PC-9 (cell line): ENCODE measurements at regions of chr10 and their contacts with region 1.

Region 1: GRCh38 chr10:114767101-114767985 is 54.2 kb upstream of the FHIP2A start:
- DNase-seq: no peak
- H3K4me3 ChIP-seq: peak overlapping the region; percentile 71
- H3K27ac ChIP-seq: no peak overlapping the region
- H3K4me1 ChIP-seq: peaks cover 16% of the 10 kb centered on the region
- H3K27me3 ChIP-seq: no peaks in the 10 kb centered on the region
- CTCF ChIP-seq: no peak

Region 2: DNA sequence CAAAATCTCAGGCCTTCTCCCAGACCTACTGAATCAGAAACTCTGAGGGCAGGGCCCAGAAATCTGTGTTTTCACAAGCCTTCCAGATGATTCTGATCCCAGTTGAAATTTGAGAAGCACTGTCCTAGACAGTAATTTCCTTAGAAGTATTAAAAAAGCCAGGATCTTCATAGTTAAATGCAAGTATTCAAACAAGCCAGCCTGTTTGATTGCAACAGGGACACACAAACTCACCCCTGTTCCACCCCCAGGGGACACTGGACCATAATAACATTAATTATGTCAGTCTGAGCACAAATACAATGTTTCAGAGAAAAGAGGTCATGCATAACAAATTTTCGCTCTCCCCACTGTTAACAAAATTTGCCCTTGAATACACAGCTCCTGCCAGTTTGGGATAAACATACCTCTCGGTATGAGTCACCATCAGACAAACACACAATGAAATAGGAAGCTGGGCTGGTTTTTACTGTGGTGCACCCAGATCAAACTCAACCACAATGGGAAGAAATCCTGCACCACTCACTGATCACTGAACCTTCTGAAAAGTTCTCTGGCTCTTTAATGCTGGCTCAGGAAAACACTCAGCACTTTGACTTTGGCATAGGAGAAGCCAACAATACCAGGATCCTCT is 143.6 kb before region 1 on chr10:
- CTCF ChIA-PET with region 1: no interaction called
- POLR2A ChIA-PET with region 1: interaction called, 11 read pairs
- intact Hi-C with region 1: no loop called
- DNase-seq: peak; percentile 52 to 96
- H3K4me3 ChIP-seq: no peak overlapping the region
- H3K27ac ChIP-seq: peak overlapping the region; percentile 91
- H3K4me1 ChIP-seq: peaks cover 62% of the 10 kb centered on the region
- H3K27me3 ChIP-seq: no peaks in the 10 kb centered on the region
- CTCF ChIP-seq: no peak

Region 3: DNA sequence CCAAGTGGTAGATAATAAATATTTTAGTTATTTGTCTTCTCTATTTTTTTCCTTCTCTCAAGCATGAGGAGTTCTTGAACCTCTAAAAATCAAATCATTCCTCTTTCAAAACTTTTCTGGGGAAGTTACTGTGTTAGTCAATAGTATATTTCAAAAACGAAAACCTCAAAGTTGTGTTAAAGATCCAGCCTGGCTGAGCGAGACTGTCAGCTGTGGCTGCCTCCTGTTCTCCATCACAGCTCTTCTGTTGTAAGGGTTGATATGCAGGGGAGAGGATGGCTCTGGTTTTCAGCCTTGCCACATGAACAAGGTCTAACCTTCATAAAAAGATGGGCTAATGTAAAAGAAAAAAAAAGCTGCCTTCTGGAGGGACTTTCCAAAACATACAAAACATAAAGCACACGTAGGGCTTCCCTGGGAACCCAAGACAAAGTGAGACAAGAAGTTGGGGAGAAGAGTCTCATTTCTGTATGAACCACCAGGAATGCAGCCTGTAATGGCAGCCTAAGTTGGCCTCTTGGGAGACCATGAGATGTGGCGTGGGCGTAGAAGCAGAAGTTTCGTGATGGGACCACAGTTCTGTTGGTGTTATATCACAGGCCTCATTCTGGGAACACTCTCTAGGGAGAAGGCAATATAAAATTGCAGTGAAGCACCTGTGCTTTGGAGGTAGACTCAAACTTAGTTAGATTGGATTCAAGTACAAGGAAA is 23.7 kb before region 1 on chr10:
- CTCF ChIA-PET with region 1: no interaction called
- POLR2A ChIA-PET with region 1: no interaction called
- intact Hi-C with region 1: no loop called
- DNase-seq: no peak
- H3K4me3 ChIP-seq: no peak overlapping the region
- H3K27ac ChIP-seq: no peak overlapping the region
- H3K4me1 ChIP-seq: no peaks in the 10 kb centered on the region
- H3K27me3 ChIP-seq: no peaks in the 10 kb centered on the region
- CTCF ChIP-seq: no peak